CD14-positive monocyte (primary cell): ENCODE measurements at regions of chr9 and their contacts with region 1.

Region 1: GRCh38 chr9:114499528-114499927 is 5.7 kb downstream of the WHRN start:
- DNase-seq: no peak
- H3K4me3 ChIP-seq: no peak overlapping the region
- H3K4me3 Mint-ChIP-seq: no peak overlapping the region
- H3K27ac ChIP-seq: no peak overlapping the region
- H3K27ac Mint-ChIP-seq: peak overlapping the region in 2 of 7 donors; percentile 61
- H3K4me1 ChIP-seq: peaks cover 3 to 5% of the 10 kb centered on the region in 2 donors
- H3K4me1 Mint-ChIP-seq: no peaks in the 10 kb centered on the region
- H3K27me3 ChIP-seq: peaks cover 9 to 40% of the 10 kb centered on the region in 2 donors
- H3K27me3 Mint-ChIP-seq: peaks cover 28 to 42% (median 35%) of the 10 kb centered on the region in 3 donors
- CTCF ChIP-seq: no peak

Region 2: GRCh38 chr9:114348906-114349482 is 150.5 kb before region 1 on chr9:
- intact Hi-C with region 1: loop called in 1 of 2 experiments (anchors 10 kb)
- DNase-seq: peak; percentile 50 to 71 (median 64)
- H3K4me3 ChIP-seq: no peak overlapping the region
- H3K4me3 Mint-ChIP-seq: no peak overlapping the region
- H3K27ac ChIP-seq: peak overlapping the region in 1 of 2 donors; percentile 69
- H3K27ac Mint-ChIP-seq: peak overlapping the region; percentile 72 to 91 (median 85)
- H3K4me1 ChIP-seq: no peaks in the 10 kb centered on the region
- H3K4me1 Mint-ChIP-seq: peaks cover 17% of the 10 kb centered on the region
- H3K27me3 ChIP-seq: no peaks in the 10 kb centered on the region
- H3K27me3 Mint-ChIP-seq: peaks cover 0 to 2% (median 0%) of the 10 kb centered on the region in 3 donors
- CTCF ChIP-seq: no peak